A673 (cell line): ENCODE measurements at regions of chr9 and their contacts with region 1.

Region 1: DNA sequence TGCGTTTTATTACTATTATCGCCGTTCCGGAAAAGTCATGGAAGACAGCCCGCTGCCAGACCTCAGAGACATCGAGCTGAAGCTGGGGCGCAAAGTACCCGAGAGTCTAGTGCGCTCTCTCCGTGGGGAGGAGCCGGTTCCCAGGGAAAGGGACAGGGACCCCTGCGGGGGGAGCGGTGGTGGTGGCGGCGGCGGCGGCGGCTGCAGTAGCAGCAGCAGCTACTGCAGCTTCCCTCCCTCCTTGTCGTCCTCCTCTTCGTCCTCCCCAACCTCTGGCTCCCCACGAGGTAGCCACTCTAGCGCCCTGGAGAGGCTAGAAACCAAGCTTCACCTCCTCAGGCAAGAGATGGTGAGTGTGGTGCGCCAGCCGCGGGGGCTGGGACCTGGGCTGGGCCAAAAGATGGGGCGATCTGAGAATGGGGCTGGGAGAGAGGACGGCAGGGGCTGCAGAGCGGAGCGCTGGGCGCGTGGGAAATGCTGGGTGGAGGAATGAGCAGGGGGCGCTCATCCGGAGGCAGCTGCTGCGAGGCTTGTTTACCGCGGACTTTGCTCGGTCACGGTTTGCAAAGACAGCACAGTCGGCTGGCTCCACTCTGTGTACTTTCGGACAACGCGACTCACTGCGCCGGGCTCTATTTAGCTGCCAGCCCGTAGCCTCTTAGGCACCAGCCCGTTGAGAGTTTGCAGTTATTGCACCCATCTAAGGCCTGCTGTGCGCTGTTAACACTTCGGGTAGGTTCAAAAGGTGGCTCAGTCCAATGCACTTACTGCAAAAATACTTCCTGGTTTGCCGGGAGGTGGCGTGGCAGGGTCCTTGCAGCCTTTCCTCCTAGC is 1.1 kb downstream of the LURAP1L start:
- DNase-seq: peak; percentile 82
- H3K4me3 ChIP-seq: peak overlapping the region; percentile 60
- H3K27ac ChIP-seq: no peak overlapping the region
- H3K4me1 ChIP-seq: peaks cover 5% of the 10 kb centered on the region
- H3K27me3 ChIP-seq: peaks cover 6% of the 10 kb centered on the region
- CTCF ChIP-seq: peak; percentile 50

Region 2: DNA sequence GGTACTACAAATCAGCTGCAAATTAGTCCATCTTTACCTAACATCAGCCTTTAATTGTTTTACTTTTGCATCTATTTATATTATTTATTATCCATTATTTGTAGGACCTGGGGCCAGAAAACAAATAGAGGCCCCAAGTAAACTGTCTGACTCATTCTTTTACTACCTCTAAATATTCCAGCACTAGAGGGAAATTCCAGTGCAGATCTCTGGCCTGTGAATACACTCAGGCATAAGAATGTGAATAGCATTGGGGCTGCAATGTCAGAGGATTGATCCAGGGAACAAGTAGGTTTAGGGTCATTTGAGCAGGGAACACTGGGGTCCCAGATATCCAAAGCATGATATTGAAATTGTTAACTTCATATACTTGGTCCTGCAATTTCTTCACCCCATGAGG is 259.3 kb before region 1 on chr9:
- CTCF ChIA-PET with region 1: no interaction called
- POLR2A ChIA-PET with region 1: no interaction called
- intact Hi-C with region 1: no loop called
- DNase-seq: no peak
- H3K4me3 ChIP-seq: no peak overlapping the region
- H3K27ac ChIP-seq: no peak overlapping the region
- H3K4me1 ChIP-seq: no peaks in the 10 kb centered on the region
- H3K27me3 ChIP-seq: no peaks in the 10 kb centered on the region
- CTCF ChIP-seq: no peak

Region 3: GRCh38 chr9:12884737-12885414 is 109.0 kb after region 1 on chr9:
- CTCF ChIA-PET with region 1: interaction called, 9 read pairs
- POLR2A ChIA-PET with region 1: no interaction called
- intact Hi-C with region 1: loop called (anchors 2 kb)
- DNase-seq: peak; percentile 71
- H3K4me3 ChIP-seq: no peak overlapping the region
- H3K27ac ChIP-seq: no peak overlapping the region
- H3K4me1 ChIP-seq: peaks cover 21% of the 10 kb centered on the region
- H3K27me3 ChIP-seq: no peaks in the 10 kb centered on the region
- CTCF ChIP-seq: peak; percentile 71